ENCODE measurements at regions of chr2 and their contacts with region 1.

Region 1: GRCh38 chr2:101012706-101013181 is 10.7 kb downstream of the RPL31 start:
- DNase-seq: peak in 1 of 2 donors; percentile 73
- ATAC-seq: peak in 1 of 3 donors; percentile 36
- H3K4me3 ChIP-seq: no peak overlapping the region
- H3K4me3 Mint-ChIP-seq: no peak overlapping the region
- H3K27ac ChIP-seq: no peak overlapping the region
- H3K27ac Mint-ChIP-seq: peak overlapping the region in 1 of 2 donors; percentile 52
- H3K4me1 ChIP-seq: no peaks in the 10 kb centered on the region
- H3K4me1 Mint-ChIP-seq: peaks cover 22 to 32% of the 10 kb centered on the region in 2 donors
- H3K27me3 ChIP-seq: no peaks in the 10 kb centered on the region
- H3K27me3 Mint-ChIP-seq: no peaks in the 10 kb centered on the region
- CTCF ChIP-seq: peak; percentile 89

Region 2: DNA sequence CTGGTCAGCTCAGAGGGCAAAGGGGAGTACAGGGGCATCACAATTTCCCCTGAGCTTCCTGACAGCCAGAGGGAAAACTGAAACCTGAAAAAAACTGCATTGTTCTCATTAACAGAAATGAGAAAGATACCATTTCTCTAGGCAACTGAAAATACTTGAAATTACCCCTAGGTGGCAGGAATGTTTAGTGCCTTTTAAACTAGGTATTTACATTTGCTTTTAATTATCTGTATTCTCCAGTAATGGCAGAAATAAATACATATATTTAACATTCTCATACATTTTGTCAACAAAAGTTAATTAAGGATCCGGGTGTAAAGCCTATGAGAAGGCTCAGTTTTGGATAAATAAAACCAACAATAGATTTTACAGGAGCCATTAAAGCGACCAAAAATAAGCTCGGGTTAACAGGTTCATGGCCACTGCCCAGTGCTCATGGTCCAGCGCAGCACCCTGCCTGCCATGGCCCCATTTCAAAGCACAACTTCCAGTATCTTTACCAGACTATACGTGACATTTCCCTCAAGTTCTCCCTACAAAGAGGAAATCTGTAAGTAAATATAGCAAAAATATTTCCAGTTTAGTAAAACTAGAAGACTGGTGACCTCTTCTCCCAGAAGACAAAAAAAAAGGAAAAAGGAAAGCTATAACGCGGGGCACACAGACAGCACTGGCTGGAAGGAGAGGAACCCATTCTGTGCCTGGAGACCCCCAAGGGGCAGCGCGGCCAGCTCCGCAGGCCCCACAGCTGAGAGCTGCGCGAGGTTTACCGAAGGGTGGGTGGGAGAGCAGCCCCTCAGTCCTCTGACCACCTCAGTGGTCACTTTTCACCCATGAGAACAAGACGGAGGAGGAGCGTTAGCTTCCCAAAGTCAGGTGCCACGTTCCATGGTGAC is 24.1 kb after region 1 on chr2:
- intact Hi-C with region 1: no loop called
- DNase-seq: no peak
- ATAC-seq: no peak
- H3K4me3 ChIP-seq: no peak overlapping the region
- H3K4me3 Mint-ChIP-seq: no peak overlapping the region
- H3K27ac ChIP-seq: no peak overlapping the region
- H3K27ac Mint-ChIP-seq: no peak overlapping the region
- H3K4me1 ChIP-seq: no peaks in the 10 kb centered on the region
- H3K4me1 Mint-ChIP-seq: no peaks in the 10 kb centered on the region
- H3K27me3 ChIP-seq: no peaks in the 10 kb centered on the region
- H3K27me3 Mint-ChIP-seq: peaks cover 2 to 12% of the 10 kb centered on the region in 2 donors
- CTCF ChIP-seq: no peak

Region 3: GRCh38 chr2:101057051-101057933 is 44.5 kb after region 1 on chr2:
- intact Hi-C with region 1: no loop called
- DNase-seq: no peak
- ATAC-seq: no peak
- H3K4me3 ChIP-seq: no peak overlapping the region
- H3K4me3 Mint-ChIP-seq: no peak overlapping the region
- H3K27ac ChIP-seq: no peak overlapping the region
- H3K27ac Mint-ChIP-seq: no peak overlapping the region
- H3K4me1 ChIP-seq: no peaks in the 10 kb centered on the region
- H3K4me1 Mint-ChIP-seq: no peaks in the 10 kb centered on the region
- H3K27me3 ChIP-seq: no peaks in the 10 kb centered on the region
- H3K27me3 Mint-ChIP-seq: peaks cover 5 to 6% of the 10 kb centered on the region in 2 donors
- CTCF ChIP-seq: no peak

Region 4: DNA sequence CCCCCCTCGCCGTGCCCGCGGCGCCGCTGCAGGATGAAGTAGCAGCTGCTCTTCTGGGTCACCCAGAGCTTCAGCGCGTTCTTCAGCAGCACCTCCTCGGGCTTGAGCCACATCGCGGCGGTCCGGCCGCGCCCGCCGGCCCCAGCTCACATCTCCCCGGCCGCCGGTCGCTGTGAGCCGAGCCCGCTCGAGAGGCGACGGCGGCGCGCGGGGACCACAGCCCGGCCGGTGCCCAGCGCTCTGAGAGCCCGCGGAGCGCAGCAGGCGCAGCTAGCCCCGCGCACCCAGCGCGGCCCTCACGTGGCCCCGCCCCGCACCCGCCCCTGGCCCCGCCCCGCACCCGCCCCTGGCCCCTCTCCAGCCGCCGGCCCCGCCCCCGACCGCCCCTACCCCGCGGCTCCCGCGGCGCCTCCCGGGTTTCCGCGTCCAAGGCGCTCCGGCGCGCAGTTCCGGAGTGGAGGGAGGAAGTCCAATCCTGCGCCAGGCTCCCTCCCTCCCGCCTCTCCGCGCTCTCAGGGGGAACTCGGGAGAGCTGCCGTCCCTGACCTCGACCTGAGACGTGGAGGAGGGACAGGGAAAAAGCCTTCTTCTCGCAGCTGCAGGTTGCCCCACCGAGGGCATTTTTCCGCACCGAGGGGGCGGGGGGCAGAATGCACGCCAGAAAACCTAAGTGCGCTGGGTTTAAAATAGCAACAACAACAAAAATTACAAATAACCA is 138.6 kb after region 1 on chr2 and contains the start of gene TBC1D8:
- intact Hi-C with region 1: loop called (anchors 1 kb)
- DNase-seq: peak; percentile 38 to 71
- ATAC-seq: peak; percentile 75 to 83 (median 79)
- H3K4me3 ChIP-seq: peak within 1 kb of the TSS; percentile 51
- H3K4me3 Mint-ChIP-seq: peak within 1 kb of the TSS; percentile 84
- H3K27ac ChIP-seq: no peak within 1 kb of the TSS
- H3K27ac Mint-ChIP-seq: peak within 1 kb of the TSS; percentile 51 to 71
- H3K4me1 ChIP-seq: peaks cover 32% of the 10 kb centered on the region
- H3K4me1 Mint-ChIP-seq: peaks cover 22 to 33% of the 10 kb centered on the region in 2 donors
- H3K27me3 ChIP-seq: peaks cover 23% of the 10 kb centered on the region
- H3K27me3 Mint-ChIP-seq: peaks cover 25 to 33% of the 10 kb centered on the region in 2 donors
- CTCF ChIP-seq: no peak
- total RNA-seq, gene TBC1D8: 2.2 to 8.7 (median 5.1) TPM

Region 5: DNA sequence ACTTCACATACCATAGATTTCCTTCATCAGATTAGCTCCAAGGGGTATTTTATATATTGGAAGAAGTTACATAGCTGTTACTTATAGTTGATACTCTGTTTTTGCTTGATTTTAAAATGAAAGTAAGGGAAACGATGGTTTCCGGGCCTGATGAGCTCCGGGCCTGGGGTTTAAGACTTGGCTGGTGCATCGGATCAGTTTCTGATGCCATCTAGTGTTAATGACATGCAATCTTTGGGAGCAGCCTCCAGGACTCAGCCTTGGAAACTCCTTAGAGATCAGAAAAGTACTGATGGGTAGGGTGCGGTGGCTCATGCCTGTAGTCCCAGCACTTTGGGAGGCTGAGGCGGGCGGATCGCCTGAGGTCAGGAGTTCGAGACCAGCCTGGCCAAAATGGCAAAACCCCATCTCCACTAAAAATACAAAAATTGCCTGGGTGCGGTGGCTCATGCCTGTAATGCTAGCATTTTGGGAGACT is 192.8 kb after region 1 on chr2:
- intact Hi-C with region 1: loop called (anchors 1 kb)
- DNase-seq: peak in 1 of 2 donors; percentile 74
- ATAC-seq: peak; percentile 63 to 83 (median 72)
- H3K4me3 ChIP-seq: no peak overlapping the region
- H3K4me3 Mint-ChIP-seq: peak overlapping the region; percentile 51
- H3K27ac ChIP-seq: no peak overlapping the region
- H3K27ac Mint-ChIP-seq: peak overlapping the region; percentile 23 to 70
- H3K4me1 ChIP-seq: peaks cover 5% of the 10 kb centered on the region
- H3K4me1 Mint-ChIP-seq: peaks cover 0 to 7% of the 10 kb centered on the region in 2 donors
- H3K27me3 ChIP-seq: no peaks in the 10 kb centered on the region
- H3K27me3 Mint-ChIP-seq: no peaks in the 10 kb centered on the region
- CTCF ChIP-seq: no peak

Region 6: DNA sequence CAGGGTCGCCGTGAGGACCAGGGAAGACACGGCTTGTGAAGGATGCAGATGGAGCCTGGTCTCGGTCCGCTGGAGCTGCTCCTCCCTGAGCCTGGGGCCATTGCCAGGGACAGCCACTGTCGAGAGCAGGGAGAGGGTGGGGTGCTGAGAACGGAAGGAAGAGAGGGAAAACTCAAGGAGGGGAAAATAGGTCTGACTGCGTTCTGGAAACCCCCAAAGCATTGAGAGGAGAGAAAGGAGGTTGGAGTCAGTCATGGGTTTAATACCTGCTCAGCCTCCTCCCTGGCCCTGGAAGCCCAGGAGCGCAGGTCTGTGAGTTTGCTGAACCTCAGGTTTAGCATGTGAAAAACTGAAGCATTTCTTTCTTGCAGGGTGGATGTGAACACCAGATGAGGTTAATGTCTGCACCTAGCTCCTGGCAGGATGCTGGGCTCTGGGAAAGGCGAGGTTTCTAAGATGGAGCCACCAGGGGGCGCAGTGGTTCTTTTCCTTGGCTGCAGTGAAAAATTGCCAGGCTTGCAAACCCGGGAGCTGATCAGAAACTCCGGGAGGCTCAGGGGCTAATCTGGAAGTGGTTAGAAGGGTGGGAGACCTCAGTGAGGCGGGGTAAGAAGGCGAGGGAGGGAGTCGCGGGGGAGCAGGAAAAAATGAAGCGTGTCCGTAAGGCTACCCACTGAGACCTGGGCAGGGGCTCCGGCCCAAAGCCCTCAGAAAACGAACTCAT is 329.3 kb after region 1 on chr2:
- intact Hi-C with region 1: loop called (anchors 2 kb)
- DNase-seq: peak; percentile 66 to 86
- ATAC-seq: peak; percentile 44 to 62 (median 61)
- H3K4me3 ChIP-seq: no peak overlapping the region
- H3K4me3 Mint-ChIP-seq: no peak overlapping the region
- H3K27ac ChIP-seq: no peak overlapping the region
- H3K27ac Mint-ChIP-seq: no peak overlapping the region
- H3K4me1 ChIP-seq: peaks cover 13% of the 10 kb centered on the region
- H3K4me1 Mint-ChIP-seq: peaks cover 14 to 15% of the 10 kb centered on the region in 2 donors
- H3K27me3 ChIP-seq: no peaks in the 10 kb centered on the region
- H3K27me3 Mint-ChIP-seq: no peaks in the 10 kb centered on the region
- CTCF ChIP-seq: peak; percentile 84

Measured in natural killer cell (primary cell).